T-cell (primary cell): ENCODE measurements at regions of chr11 and their contacts with region 1.

Region 1: GRCh38 chr11:119101759-119102423 is at the start of gene DPAGT1:
- DNase-seq: peak; percentile 70 to 89 (median 80)
- ATAC-seq: peak; percentile 85 to 90 (median 86)
- H3K4me3 ChIP-seq: peak within 1 kb of the TSS; percentile 83 to 98
- H3K4me3 Mint-ChIP-seq: peak within 1 kb of the TSS; percentile 86 to 98 (median 97)
- H3K27ac ChIP-seq: peak within 1 kb of the TSS; percentile 87
- H3K27ac Mint-ChIP-seq: peak within 1 kb of the TSS; percentile 99 to 100
- H3K4me1 ChIP-seq: peaks cover 16 to 35% of the 10 kb centered on the region in 2 experiments
- H3K4me1 Mint-ChIP-seq: peaks cover 39 to 57% (median 53%) of the 10 kb centered on the region in 3 donors
- H3K27me3 ChIP-seq: no peaks in the 10 kb centered on the region
- H3K27me3 Mint-ChIP-seq: no peaks in the 10 kb centered on the region
- total RNA-seq, gene DPAGT1: 21.7 to 54.2 (median 43.9) TPM

Region 2: GRCh38 chr11:118956094-118956846 is 145.6 kb before region 1 on chr11 and contains the start of gene UPK2:
- CTCF ChIA-PET with region 1: no interaction called
- POLR2A ChIA-PET with region 1: no interaction called
- DNase-seq: peak; percentile 67 to 93 (median 85)
- ATAC-seq: peak; percentile 96 to 99 (median 98)
- H3K4me3 ChIP-seq: no peak within 1 kb of the TSS
- H3K4me3 Mint-ChIP-seq: no peak within 1 kb of the TSS
- H3K27ac ChIP-seq: no peak within 1 kb of the TSS
- H3K27ac Mint-ChIP-seq: no peak within 1 kb of the TSS
- H3K4me1 ChIP-seq: peaks cover 0 to 10% of the 10 kb centered on the region in 2 experiments
- H3K4me1 Mint-ChIP-seq: peaks cover 5 to 11% (median 6%) of the 10 kb centered on the region in 3 donors
- H3K27me3 ChIP-seq: peaks cover 0 to 32% of the 10 kb centered on the region in 2 experiments
- H3K27me3 Mint-ChIP-seq: peaks cover 0 to 13% of the 10 kb centered on the region in 2 donors
- total RNA-seq, gene UPK2: 0.32 TPM in 1 of 5 donors, not detected in the others

Region 3: DNA sequence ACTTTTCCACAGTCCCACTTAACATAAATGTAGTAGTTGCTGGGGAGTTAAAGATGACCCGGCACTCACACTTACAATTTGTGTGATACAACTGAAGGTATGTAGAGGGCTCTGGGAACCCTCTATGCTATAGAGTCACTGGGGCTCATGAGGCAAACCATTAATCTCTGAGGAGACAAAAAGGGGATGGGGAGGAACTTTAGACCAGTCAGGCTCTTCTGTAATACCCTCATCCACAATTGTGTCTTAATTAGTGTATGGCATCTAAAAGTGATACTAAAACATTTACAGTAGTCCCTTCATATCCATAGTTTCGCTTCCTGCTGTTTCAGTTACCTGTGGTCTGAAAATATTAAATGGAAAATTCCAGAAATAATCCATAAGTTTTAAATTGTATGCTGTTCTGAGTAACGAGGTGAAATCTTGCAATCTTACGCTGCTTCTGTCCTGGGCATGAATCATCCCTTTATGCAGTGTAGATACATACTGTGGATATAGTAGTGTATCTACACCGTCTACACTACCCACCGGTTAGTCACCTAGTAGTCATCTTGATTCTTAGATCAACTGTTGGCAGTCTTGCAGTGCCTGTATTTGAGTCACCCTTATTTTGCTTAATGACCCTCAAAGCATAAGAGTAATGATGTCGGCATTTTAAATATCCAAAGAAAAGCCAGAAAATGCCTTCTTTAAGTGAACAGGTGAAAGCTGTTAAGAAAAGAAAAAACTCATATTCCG is 116.4 kb after region 1 on chr11:
- CTCF ChIA-PET with region 1: no interaction called
- POLR2A ChIA-PET with region 1: interaction called in 1 of 2 experiments, 14 read pairs
- DNase-seq: no peak
- ATAC-seq: peak in 2 of 4 experiments; percentile 44 to 60
- H3K4me3 ChIP-seq: no peak overlapping the region
- H3K4me3 Mint-ChIP-seq: no peak overlapping the region
- H3K27ac ChIP-seq: no peak overlapping the region
- H3K27ac Mint-ChIP-seq: peak overlapping the region; percentile 27 to 40
- H3K4me1 ChIP-seq: peaks cover 2 to 33% of the 10 kb centered on the region in 2 experiments
- H3K4me1 Mint-ChIP-seq: peaks cover 53 to 72% (median 64%) of the 10 kb centered on the region in 3 donors
- H3K27me3 ChIP-seq: no peaks in the 10 kb centered on the region
- H3K27me3 Mint-ChIP-seq: no peaks in the 10 kb centered on the region